Activated T-helper 2 cell treated with anti-CD3 and anti-CD28 coated beads, Interferon-gamma antibody, Interleukin-2, Interleukin-4, amounts not matched to agents 10 μg/mL and 5 μg/mL and 100 μg/mL, durations not matched to agents 14 hours and 24 hours and 36 hours (primary cell): ENCODE measurements at regions of chr21 and their contacts with region 1.

Region 1: GRCh38 chr21:42062236-42063022 is 8.7 kb upstream of the UMODL1 start:
- DNase-seq: peak; percentile 87
- H3K4me3 Mint-ChIP-seq: peak overlapping the region; percentile 70
- H3K27ac Mint-ChIP-seq: peak overlapping the region; percentile 83
- H3K4me1 Mint-ChIP-seq: peaks cover 38% of the 10 kb centered on the region
- H3K27me3 Mint-ChIP-seq: no peaks in the 10 kb centered on the region

Region 2: DNA sequence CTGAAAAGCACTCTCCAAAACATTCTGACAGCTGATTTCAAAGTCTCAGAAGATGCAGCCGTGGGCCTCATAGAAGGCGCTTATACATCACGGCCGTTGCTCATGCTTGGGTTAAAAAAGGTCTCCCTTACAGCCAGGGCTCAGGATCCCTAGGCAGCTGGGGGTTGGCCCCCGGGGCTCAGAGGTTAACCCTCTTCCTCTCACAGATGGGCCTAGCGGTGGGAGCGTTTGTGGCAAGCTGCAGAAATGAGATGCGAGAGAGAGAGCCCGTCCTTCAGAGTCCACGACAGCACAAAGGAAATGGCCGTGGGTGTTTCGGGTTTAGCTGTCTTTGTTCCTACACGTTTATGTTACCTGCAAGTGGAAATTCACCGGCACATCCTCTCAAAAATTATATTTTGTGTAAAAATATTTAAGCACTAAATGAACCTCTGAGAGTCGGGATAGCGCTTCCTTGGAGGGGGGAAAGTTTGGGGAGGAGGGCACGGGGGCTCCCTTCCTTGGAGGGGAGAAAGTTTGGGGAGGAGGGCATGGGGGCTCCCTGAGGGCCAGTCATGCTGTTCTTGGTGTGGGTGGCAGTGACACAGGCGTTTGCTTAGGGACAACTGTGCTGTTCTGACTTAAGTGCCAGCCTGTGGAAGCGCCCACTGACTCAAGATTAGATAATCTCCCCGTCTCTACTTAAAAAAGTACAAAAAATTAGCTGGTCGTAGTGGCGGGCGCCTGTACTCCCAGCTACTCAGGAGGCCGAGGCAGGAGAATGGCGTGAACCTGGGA is 162.8 kb before region 1 on chr21:
- intact Hi-C with region 1: loop called (anchors 2 kb)
- DNase-seq: peak; percentile 33
- H3K4me3 Mint-ChIP-seq: peak overlapping the region; percentile 26
- H3K27ac Mint-ChIP-seq: peak overlapping the region; percentile 87
- H3K4me1 Mint-ChIP-seq: peaks cover 35% of the 10 kb centered on the region
- H3K27me3 Mint-ChIP-seq: no peaks in the 10 kb centered on the region

Region 3: DNA sequence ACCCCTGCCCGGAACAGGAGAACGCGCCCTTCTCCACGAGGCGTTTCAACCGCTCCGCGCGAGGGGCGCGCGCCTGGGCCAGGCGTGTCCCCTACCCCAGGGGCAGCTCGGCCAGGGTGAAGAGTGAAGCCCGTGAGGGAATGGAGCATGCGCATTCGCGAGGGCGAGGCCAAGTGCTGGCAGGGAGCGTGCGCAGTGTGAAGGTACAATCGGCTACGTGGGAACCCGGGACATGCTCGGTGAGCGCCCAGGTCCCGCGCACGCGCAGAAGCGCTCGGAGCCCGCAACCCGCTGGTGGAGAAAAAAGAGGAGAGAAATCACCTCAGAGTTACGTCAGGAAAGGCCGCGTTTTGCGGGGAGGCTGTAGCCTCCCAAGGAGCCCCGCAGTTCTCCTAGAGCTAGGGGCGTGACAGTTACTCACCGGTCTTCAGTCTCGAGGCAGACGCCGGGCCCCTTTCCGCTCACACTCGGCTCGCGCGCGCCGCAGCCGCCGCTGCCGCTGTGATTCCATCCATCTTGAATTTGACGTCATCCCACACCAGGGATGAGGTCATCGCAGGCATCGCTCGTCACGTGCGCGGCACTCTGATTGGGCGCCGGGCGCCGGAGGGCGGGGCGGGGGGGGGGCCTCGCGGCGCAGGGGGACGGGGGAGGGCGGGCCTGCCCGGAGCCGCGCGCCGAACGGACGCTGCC is 52.5 kb before region 1 on chr21 and contains the start of gene ZBTB21:
- intact Hi-C with region 1: loop called (anchors 1 kb)
- DNase-seq: peak; percentile 97
- H3K4me3 Mint-ChIP-seq: peak within 1 kb of the TSS; percentile 94
- H3K27ac Mint-ChIP-seq: peak within 1 kb of the TSS; percentile 99
- H3K4me1 Mint-ChIP-seq: peaks cover 25% of the 10 kb centered on the region
- H3K27me3 Mint-ChIP-seq: peaks cover 18% of the 10 kb centered on the region
- total RNA-seq, gene ZBTB21: 24.5 and 25.7 TPM in 2 replicates

Region 4: GRCh38 chr21:42107881-42108553 is 45.6 kb after region 1 on chr21:
- intact Hi-C with region 1: loop called (anchors 5 kb)
- DNase-seq: peak; percentile 58
- H3K4me3 Mint-ChIP-seq: no peak overlapping the region
- H3K27ac Mint-ChIP-seq: no peak overlapping the region
- H3K4me1 Mint-ChIP-seq: peaks cover 4% of the 10 kb centered on the region
- H3K27me3 Mint-ChIP-seq: peaks cover 5% of the 10 kb centered on the region

Region 5: GRCh38 chr21:42360317-42360716 is 297.9 kb after region 1 on chr21:
- intact Hi-C with region 1: no loop called
- DNase-seq: no peak
- H3K4me3 Mint-ChIP-seq: no peak overlapping the region
- H3K27ac Mint-ChIP-seq: no peak overlapping the region
- H3K4me1 Mint-ChIP-seq: peaks cover 2% of the 10 kb centered on the region
- H3K27me3 Mint-ChIP-seq: peaks cover 13% of the 10 kb centered on the region